Tibial artery (tissue), 4 donors: ENCODE measurements at regions of chr1 and their contacts with region 1.

Region 1: DNA sequence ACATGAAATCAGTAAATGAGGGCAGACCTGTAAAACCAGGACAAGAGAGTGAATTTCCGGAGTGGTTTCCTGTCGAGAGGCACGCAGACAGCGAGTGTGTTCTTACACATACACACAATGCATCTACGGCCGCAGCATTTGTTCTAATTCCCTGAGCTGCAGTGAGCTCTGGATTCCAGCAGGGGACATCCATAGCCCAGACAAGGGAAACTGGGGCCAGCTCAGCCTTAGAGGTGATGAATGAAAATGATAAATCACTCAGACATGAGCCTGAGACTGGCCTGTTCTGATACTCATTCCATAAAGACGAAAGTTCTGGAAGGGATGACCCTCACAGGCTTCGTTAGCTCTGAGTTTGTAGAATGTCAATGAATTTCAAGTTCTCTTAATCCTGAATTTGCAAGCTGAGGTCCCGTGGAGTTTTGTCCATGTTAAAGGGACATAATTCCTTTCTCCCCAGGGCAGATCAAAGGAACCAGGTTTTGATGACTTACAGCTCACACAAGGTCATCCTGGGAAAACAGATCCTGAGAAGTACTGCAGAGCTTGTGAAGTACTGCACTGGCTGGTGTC is 207.9 kb upstream of the C1orf87 start:
- DNase-seq: peak; percentile 64 to 74
- H3K4me3 ChIP-seq: no peak overlapping the region
- H3K27ac ChIP-seq: no peak overlapping the region
- H3K4me1 ChIP-seq: peaks cover 0 to 41% (median 14%) of the 10 kb centered on the region in 4 donors
- H3K27me3 ChIP-seq: no peaks in the 10 kb centered on the region
- CTCF ChIP-seq: peak; percentile 86 to 90

Region 2: DNA sequence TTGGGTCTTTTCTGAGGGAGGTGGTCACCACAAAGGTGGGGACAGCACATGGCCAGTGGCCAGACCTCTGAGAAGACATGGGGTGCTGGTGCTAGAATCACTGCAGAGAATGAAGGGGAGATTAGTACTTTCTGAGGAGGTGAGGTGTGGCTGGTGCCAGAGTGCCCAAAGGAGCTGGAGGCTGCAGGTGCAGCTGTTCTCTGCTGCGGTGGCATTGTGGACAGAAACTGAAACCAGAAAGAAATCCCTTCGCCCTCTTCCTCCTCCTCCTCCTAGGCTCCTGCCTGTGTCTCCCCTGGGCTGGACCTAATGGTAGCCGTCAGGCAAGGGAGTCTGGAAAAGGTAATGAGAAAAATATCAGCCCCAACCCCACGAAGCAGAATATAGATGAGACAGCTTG is 1181.8 kb after region 1 on chr1:
- intact Hi-C with region 1: loop called (anchors 10 kb)
- DNase-seq: no peak
- H3K4me3 ChIP-seq: no peak overlapping the region
- H3K27ac ChIP-seq: no peak overlapping the region
- H3K4me1 ChIP-seq: no peaks in the 10 kb centered on the region
- H3K27me3 ChIP-seq: no peaks in the 10 kb centered on the region
- CTCF ChIP-seq: no peak